Activated CD8-positive, alpha-beta T cell treated with anti-CD3 and anti-CD28 coated beads for 36 hours (primary cell): ENCODE measurements at regions of chr11 and their contacts with region 1.

Region 1: DNA sequence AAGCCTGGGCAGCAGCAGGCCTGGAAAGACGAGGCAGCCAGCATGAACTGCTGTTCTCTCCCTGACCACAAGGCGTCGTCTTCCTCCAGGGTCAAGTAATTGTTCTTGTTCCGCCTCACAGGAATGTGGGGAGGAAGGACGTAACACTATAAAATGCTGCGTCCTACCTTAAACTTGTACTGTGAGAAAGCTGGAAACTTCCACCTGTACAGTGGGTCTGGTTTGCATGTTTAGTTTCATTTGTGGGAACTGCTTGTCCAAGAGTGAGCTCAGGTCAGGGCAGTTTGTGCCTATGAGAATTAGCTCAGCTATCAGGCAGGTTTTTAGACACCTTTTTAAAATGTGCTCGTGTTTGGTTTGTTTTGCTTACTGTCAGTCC is 55.2 kb downstream of the PANX1 start:
- DNase-seq: peak; percentile 40
- ATAC-seq: no peak
- H3K4me3 Mint-ChIP-seq: no peak overlapping the region
- H3K27ac Mint-ChIP-seq: no peak overlapping the region
- H3K4me1 Mint-ChIP-seq: no peaks in the 10 kb centered on the region
- H3K27me3 Mint-ChIP-seq: no peaks in the 10 kb centered on the region
- CTCF ChIP-seq: peak; percentile 77

Region 2: GRCh38 chr11:94077552-94078293 is 106.2 kb before region 1 on chr11:
- CTCF ChIA-PET with region 1: no interaction called
- POLR2A ChIA-PET with region 1: no interaction called
- intact Hi-C with region 1: no loop called
- DNase-seq: no peak
- ATAC-seq: no peak
- H3K4me3 Mint-ChIP-seq: no peak overlapping the region
- H3K27ac Mint-ChIP-seq: no peak overlapping the region
- H3K4me1 Mint-ChIP-seq: no peaks in the 10 kb centered on the region
- H3K27me3 Mint-ChIP-seq: peaks cover 19% of the 10 kb centered on the region
- CTCF ChIP-seq: no peak

Region 3: DNA sequence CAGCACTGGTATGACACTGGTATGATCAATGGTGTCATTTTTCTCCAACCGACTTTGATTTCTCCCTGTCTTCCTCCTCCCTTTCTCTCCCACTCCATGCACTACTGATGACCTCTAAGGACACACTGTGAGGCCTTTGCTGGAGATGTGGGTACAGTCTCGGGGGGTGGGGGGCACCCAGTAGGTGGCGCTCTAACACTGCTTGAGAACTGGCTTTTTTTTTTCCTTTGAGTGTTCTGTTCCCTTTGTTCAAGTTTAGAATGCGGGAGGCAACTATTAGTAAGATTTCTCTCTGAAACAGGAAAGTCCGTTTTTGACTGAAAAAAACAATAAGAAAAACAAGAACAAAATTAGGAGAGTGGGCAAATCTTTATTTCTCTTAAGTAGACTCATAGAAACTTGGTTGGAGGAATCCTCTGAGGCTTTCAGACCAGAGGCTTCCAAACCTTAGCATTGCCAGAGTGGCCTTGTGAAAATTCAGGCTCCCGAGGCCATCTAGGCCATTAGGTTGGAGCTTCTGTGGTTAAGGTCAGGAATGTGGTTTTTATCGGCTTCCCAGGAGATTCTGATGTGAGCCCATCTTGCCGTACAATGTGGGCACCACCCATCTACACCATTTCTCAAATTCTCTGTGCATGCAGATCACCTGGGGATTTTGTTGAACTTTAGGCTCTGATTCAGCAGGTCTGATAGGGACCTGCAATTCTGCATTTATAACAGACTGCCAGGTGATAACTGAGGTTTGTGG is 12.0 kb before region 1 on chr11:
- CTCF ChIA-PET with region 1: interaction called, 18 read pairs
- POLR2A ChIA-PET with region 1: no interaction called
- intact Hi-C with region 1: no loop called
- DNase-seq: peak; percentile 69
- ATAC-seq: peak; percentile 53
- H3K4me3 Mint-ChIP-seq: no peak overlapping the region
- H3K27ac Mint-ChIP-seq: no peak overlapping the region
- H3K4me1 Mint-ChIP-seq: peaks cover 14% of the 10 kb centered on the region
- H3K27me3 Mint-ChIP-seq: no peaks in the 10 kb centered on the region
- CTCF ChIP-seq: peak; percentile 73

Region 4: DNA sequence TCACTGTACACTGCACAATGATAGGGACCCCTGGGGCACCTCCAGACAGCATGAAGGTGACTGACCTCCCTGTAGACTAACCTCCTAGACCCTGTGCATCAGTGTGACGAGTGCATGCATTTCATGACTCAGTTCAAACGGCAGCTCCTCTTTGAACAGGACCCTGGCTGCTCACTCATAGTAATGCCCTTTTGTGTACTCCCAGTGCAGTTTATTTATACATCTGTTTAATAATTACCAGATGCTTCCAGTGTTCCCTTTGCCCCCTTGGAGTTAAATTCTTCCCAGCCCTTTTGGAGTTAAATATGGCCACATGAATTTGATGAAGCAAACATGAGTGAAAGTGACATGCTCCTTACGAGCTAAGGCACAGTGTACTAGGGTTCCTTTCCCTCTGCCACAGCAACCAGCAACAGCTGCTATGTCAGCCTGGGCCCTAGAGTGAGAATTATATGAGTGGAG is 17.2 kb after region 1 on chr11:
- CTCF ChIA-PET with region 1: interaction called, 10 read pairs
- POLR2A ChIA-PET with region 1: interaction called, 3 read pairs
- intact Hi-C with region 1: no loop called
- DNase-seq: no peak
- ATAC-seq: no peak
- H3K4me3 Mint-ChIP-seq: no peak overlapping the region
- H3K27ac Mint-ChIP-seq: no peak overlapping the region
- H3K4me1 Mint-ChIP-seq: no peaks in the 10 kb centered on the region
- H3K27me3 Mint-ChIP-seq: peaks cover 1% of the 10 kb centered on the region
- CTCF ChIP-seq: no peak